ENCODE measurements at regions of chr2 and their contacts with region 1.

Region 1: GRCh38 chr2:239308661-239309397 is 92.0 kb downstream of the HDAC4 start:
- DNase-seq: peak; percentile 29
- H3K4me3 ChIP-seq: peak overlapping the region; percentile 11 to 41 (median 29)
- H3K27ac ChIP-seq: peak overlapping the region; percentile 77 to 93 (median 85)
- H3K4me1 ChIP-seq: peaks cover 28 to 77% (median 47%) of the 10 kb centered on the region in 4 donors
- H3K27me3 ChIP-seq: no peaks in the 10 kb centered on the region
- CTCF ChIP-seq: no peak
- EP300 ChIP-seq: no peak
- POLR2A ChIP-seq: peak; percentile 43

Region 2: DNA sequence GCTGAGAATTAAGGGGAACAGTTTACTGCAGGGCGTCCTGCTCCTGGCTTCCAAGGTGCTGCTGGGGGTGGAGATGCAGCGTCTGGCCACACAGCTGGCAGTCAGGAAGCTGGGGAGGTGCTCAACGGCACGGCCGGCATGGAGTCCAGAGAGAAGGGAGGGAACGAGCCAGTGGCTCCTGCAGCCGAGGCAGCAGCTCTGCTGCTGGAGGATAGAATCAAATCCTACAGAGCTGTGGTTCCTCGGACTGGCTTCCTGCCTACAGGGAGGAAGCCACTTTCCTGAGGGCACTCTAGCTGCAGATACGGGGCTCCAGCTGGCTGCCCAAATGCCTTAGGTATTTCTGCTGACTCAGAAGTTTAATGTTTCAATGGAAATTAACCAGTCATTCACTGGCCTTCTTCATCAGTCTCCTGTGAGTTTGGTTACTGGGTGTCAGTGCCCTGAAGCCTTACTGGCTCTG is 194.7 kb before region 1 on chr2:
- in situ Hi-C with region 1: no loop called
- intact Hi-C with region 1: loop called (anchors 10 kb)
- DNase-seq: no peak
- H3K4me3 ChIP-seq: no peak overlapping the region
- H3K27ac ChIP-seq: peak overlapping the region; percentile 62 to 85 (median 78)
- H3K4me1 ChIP-seq: peaks cover 20 to 35% (median 24%) of the 10 kb centered on the region in 4 donors
- H3K27me3 ChIP-seq: no peaks in the 10 kb centered on the region
- CTCF ChIP-seq: no peak
- EP300 ChIP-seq: no peak
- POLR2A ChIP-seq: no peak

Region 3: DNA sequence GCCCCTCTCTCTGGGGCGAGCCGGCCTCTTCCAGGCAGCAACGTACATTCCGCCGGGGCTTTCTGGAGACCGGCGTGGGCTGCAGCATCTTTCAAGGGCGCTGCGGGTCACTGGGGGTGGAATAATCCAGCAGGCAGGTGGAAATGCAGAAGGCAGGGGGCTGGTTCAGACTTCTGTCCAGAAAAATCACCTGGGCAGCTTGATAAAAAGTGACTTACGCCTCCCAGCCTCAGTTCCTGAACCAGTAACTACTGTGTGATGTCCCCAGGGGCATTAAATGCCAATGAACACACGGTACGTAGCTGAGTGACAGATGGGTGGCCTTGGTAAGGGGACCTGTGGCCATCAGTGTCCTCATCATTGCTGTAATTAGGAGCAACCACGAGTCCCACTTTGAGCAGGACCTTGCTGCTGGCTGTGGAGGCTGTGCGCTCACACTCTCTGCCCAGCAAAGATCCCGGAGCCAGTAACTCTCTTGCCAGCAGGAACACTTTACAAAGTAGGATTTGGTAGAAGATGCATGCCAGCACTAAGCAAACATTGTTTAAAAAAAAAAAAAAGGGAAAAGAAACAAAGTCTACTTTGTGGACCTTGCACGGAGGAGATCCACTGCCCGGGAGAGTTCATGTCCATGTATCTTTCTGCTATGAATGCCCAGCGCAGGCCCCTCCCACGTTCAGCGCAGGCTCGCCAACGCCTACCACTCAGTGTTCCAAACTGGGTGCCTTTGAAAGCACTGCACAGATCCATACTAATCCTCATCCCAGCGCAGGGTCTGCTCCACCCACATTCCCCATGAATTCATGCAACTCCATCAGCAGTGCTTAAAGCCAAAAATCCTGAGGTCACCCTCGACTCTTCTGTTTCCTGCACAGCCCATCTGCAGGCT is 85.3 kb before region 1 on chr2:
- in situ Hi-C with region 1: no loop called
- intact Hi-C with region 1: loop called (anchors 5 kb)
- DNase-seq: peak; percentile 69
- H3K4me3 ChIP-seq: peak overlapping the region in 1 of 4 donors; percentile 3
- H3K27ac ChIP-seq: peak overlapping the region; percentile 78 to 88 (median 86)
- H3K4me1 ChIP-seq: peaks cover 36 to 77% (median 68%) of the 10 kb centered on the region in 4 donors
- H3K27me3 ChIP-seq: no peaks in the 10 kb centered on the region
- CTCF ChIP-seq: no peak
- EP300 ChIP-seq: no peak
- POLR2A ChIP-seq: no peak